ENCODE measurements at regions of chr13 and their contacts with region 1.

Region 1: GRCh38 chr13:44917589-44918325 is 71.5 kb downstream of the NUFIP1 start:
- DNase-seq: peak; percentile 97
- ATAC-seq: peak; percentile 86
- H3K4me3 Mint-ChIP-seq: no peak overlapping the region
- H3K27ac Mint-ChIP-seq: no peak overlapping the region
- H3K4me1 Mint-ChIP-seq: peaks cover 2% of the 10 kb centered on the region
- H3K27me3 Mint-ChIP-seq: no peaks in the 10 kb centered on the region

Region 2: DNA sequence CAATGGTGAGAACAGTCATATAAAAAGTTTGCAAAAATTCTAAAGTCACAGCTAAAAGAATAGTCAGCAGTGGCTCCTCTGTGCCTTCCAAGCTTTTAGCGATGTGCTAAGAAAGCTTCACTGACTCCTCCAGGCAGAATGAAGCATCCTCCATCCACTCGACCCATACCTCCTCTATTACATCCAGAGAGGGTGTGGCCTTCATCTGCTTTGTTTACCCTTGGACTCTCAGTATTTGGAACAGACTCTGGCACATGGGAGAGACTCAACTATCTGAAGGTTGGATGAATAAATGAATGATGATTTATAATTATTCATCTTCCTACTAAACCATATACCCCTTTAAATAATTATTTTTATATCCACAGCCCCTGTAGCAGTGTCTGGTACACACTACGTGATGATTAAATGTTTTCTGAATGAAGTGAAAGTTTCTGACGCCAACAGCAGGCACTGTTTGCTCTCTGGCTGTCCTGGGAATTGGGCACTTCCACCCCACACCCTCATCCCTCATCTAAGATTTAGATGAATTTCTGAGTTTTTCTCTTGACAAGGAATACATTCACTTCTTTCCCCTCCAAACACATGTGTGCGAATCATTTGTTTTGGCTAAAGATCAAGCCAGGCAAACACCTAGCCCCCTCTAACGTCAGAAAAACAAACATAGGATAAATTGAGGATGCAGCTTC is 22.3 kb before region 1 on chr13:
- CTCF ChIA-PET with region 1: no interaction called
- POLR2A ChIA-PET with region 1: no interaction called
- DNase-seq: no peak
- ATAC-seq: no peak
- H3K4me3 Mint-ChIP-seq: no peak overlapping the region
- H3K27ac Mint-ChIP-seq: no peak overlapping the region
- H3K4me1 Mint-ChIP-seq: no peaks in the 10 kb centered on the region
- H3K27me3 Mint-ChIP-seq: peaks cover 5% of the 10 kb centered on the region

Region 3: DNA sequence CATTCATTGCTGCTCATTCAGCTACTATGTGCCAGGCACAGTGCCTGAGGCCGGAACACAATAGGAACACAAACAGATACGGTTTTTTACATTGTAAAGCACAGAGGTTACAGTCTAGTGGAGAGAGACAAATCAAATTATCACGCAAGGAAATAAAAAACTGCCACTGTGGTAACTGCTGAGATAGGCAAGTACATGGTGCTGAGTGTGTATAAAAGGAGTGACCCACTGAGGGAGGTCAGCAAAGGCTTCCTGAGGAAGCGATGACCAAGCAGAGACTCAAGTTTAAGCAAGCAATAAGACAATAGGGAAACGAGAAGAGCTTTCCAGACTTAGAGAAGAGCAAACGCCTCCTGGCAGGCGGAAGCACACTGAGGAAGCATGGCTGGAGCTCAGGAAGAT is 15.1 kb after region 1 on chr13:
- CTCF ChIA-PET with region 1: interaction called, 10 read pairs
- POLR2A ChIA-PET with region 1: interaction called, 3 read pairs
- DNase-seq: no peak
- ATAC-seq: no peak
- H3K4me3 Mint-ChIP-seq: no peak overlapping the region
- H3K27ac Mint-ChIP-seq: no peak overlapping the region
- H3K4me1 Mint-ChIP-seq: peaks cover 12% of the 10 kb centered on the region
- H3K27me3 Mint-ChIP-seq: peaks cover 11% of the 10 kb centered on the region

Region 4: GRCh38 chr13:44969551-44970484 is 52.1 kb after region 1 on chr13:
- CTCF ChIA-PET with region 1: interaction called, 19 read pairs
- POLR2A ChIA-PET with region 1: no interaction called
- DNase-seq: no peak
- ATAC-seq: no peak
- H3K4me3 Mint-ChIP-seq: no peak overlapping the region
- H3K27ac Mint-ChIP-seq: no peak overlapping the region
- H3K4me1 Mint-ChIP-seq: no peaks in the 10 kb centered on the region
- H3K27me3 Mint-ChIP-seq: no peaks in the 10 kb centered on the region

Measured in activated CD8-positive, alpha-beta T cell treated with anti-CD3 and anti-CD28 coated beads, Interleukin-2, amount 10 ng/mL, durations not matched to agents 7 days and 5 days (primary cell).